H1 (cell line): ENCODE measurements at regions of chr3 and their contacts with region 1.

Region 1: DNA sequence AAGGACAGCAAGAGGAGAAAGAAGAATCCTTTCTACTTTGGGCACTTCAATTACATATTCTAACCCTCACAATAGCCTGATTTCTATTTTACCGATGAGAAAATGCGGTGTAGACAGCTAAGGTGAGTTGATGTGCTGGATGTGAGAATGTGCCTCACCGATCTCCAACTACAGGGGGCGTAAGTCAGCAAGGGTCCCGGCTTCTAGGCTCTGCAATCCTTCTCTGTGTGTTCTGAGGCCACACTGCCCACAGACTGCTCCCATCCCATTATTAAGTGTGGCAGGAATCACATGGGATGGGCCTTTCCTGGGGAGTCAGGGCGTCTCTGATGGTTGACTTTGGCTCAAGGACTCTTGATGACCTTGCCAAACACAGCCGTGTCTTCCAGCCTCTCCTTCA is 23.6 kb upstream of the RPL35A start:
- DNase-seq: peak; percentile 21 to 89
- H3K4me3 ChIP-seq: no peak overlapping the region
- H3K27ac ChIP-seq: no peak overlapping the region
- H3K4me1 ChIP-seq: no peaks in the 10 kb centered on the region
- H3K27me3 ChIP-seq: no peaks in the 10 kb centered on the region
- CTCF ChIP-seq: peak; percentile 62 to 93 (median 88)
- EP300 ChIP-seq: no peak
- POLR2A ChIP-seq: no peak
- RAD21 ChIP-seq: peak; percentile 65 to 66

Region 2: GRCh38 chr3:197936819-197937384 is 10.5 kb after region 1 on chr3:
- CTCF ChIA-PET with region 1: interaction called, 22 read pairs
- POLR2A ChIA-PET with region 1: no interaction called
- DNase-seq: no peak
- H3K4me3 ChIP-seq: no peak overlapping the region; a peak in 1 of 8 replicates
- H3K27ac ChIP-seq: 0 out of 2 replicates have a peak overlapping the region, but pooled peaks have one; percentile 3
- H3K4me1 ChIP-seq: peaks cover 0 to 4% (median 0%) of the 10 kb centered on the region in 4 experiments; a peak in 1 of 7 replicates
- H3K27me3 ChIP-seq: no peaks in the 10 kb centered on the region
- CTCF ChIP-seq: no peak
- EP300 ChIP-seq: no peak
- POLR2A ChIP-seq: no peak
- RAD21 ChIP-seq: no peak

Region 3: DNA sequence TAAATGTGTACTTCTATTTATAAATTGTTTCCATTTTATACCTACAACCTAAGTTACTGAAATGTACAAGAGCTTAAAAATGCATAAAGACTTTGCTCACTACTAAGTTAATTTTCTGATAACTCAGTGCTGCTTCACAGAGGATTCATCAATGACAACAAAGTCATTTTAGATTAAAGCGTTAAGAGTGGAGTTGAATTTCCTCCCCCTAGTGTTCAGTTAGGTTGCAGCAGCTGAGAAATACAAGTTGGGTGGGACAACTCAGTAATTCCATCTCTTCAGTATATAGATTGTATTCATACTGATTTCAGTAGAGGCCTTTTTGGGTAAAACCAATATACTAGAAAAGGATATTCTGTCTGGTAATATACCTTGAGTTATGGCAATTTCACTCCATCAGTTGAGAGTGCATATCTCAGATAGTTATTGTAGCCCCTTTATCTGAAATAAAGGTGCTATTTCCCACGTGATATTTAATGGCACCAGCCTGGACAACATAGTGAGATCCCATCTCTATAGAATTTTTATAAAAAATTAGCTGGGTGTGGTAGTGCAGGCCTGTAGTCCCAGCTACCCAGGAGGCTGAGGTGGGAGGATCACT is 16.6 kb after region 1 on chr3:
- CTCF ChIA-PET with region 1: interaction called, 22 read pairs
- POLR2A ChIA-PET with region 1: no interaction called
- DNase-seq: no peak
- H3K4me3 ChIP-seq: no peak overlapping the region
- H3K27ac ChIP-seq: no peak overlapping the region
- H3K4me1 ChIP-seq: no peaks in the 10 kb centered on the region
- H3K27me3 ChIP-seq: no peaks in the 10 kb centered on the region
- CTCF ChIP-seq: peak in 2 of 3 experiments; percentile 55 to 67; a peak in 3 of 4 replicates
- EP300 ChIP-seq: no peak
- POLR2A ChIP-seq: no peak
- RAD21 ChIP-seq: peak; percentile 40 to 51; a peak in 3 of 4 replicates

Region 4: GRCh38 chr3:197974013-197974412 is 47.6 kb after region 1 on chr3:
- CTCF ChIA-PET with region 1: no interaction called
- POLR2A ChIA-PET with region 1: no interaction called
- DNase-seq: no peak
- H3K4me3 ChIP-seq: no peak overlapping the region
- H3K27ac ChIP-seq: no peak overlapping the region
- H3K4me1 ChIP-seq: no peaks in the 10 kb centered on the region
- H3K27me3 ChIP-seq: no peaks in the 10 kb centered on the region
- CTCF ChIP-seq: no peak
- EP300 ChIP-seq: no peak
- POLR2A ChIP-seq: no peak
- RAD21 ChIP-seq: no peak